ENCODE measurements at regions of chr17 and their contacts with region 1.

Region 1: GRCh38 chr17:43661699-43662412 is at the start of gene MEOX1:
- DNase-seq: peak; percentile 62
- H3K4me3 Mint-ChIP-seq: peak within 1 kb of the TSS; percentile 25
- H3K27ac Mint-ChIP-seq: peak within 1 kb of the TSS; percentile 62
- H3K4me1 Mint-ChIP-seq: peaks cover 26% of the 10 kb centered on the region
- H3K27me3 Mint-ChIP-seq: no peaks in the 10 kb centered on the region
- total RNA-seq, gene MEOX1: 0.12 to 0.17 TPM

Region 2: DNA sequence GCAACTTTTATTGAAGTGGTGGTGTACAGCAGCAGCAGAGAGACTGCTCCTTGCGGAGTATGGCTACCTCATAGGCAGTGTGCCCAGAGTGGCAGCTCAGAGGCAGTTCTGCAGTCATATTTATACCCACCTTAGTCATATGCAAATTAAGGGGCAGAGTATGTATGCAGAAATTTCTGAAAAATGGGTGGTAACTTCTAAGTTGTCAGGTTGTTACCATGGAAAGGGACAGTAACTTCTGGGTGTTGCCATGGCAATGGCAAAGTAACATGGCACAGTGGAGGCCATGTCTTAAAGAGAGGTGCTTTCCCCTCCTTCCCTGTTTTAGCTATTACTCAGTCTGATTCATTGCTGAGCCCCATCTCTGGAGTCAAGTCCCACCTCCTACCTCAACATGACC is 53.5 kb before region 1 on chr17:
- CTCF ChIA-PET with region 1: interaction called, 3 read pairs
- intact Hi-C with region 1: loop called (anchors 2 kb)
- DNase-seq: peak; percentile 88
- H3K4me3 Mint-ChIP-seq: no peak overlapping the region
- H3K27ac Mint-ChIP-seq: peak overlapping the region; percentile 70
- H3K4me1 Mint-ChIP-seq: peaks cover 9% of the 10 kb centered on the region
- H3K27me3 Mint-ChIP-seq: peaks cover 7% of the 10 kb centered on the region

Measured in activated naive CD4-positive, alpha-beta T cell treated with anti-CD3 and anti-CD28 coated beads for 36 hours (primary cell).